HepG2 (cell line): ENCODE measurements at regions of chrX and their contacts with region 1.

Region 1: DNA sequence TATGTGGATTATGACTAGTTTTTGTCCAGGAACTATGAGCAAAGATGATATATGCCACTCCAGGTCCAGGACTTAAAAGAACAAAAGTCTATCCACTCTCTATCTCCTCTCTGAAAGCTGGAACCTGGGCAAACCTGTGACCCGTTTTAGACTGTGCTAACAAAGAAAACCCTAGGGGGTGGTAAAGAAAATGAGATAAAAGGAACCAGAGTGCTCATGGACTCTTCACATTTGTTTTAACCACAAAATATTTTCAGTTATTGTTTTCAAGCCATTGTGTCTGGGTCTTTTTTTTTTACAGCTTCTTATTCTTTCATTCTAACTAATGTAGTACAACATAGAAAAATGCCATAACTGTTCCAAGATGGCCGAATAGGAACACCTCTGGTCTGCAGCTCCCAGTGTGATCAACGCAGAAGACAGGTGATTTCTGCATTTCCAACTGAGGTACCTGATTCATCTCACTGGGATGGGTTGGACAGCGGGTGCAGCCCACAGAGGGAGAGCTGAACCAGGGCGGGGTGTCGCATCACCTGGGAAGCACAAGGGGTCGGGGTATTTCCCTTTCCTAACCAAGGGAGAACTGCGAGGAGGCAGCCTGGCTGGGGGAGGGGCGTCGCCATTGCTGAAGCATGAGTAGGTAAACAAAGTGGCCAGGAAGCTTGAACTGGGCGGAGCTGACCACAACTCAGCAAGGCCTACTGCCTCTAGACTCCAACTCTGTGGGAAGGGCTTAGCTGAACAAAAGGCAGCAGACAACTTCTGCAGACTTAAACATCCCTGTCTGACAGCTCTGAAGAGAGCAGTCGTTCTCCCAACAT is 45.1 kb downstream of the CHM start:
- DNase-seq: peak; percentile 83
- ATAC-seq: peak; percentile 99
- H3K4me3 ChIP-seq: peak overlapping the region in 2 of 3 experiments; percentile 41 to 60; a peak in 4 of 6 replicates
- H3K27ac ChIP-seq: peak overlapping the region; percentile 71
- H3K4me1 ChIP-seq: peaks cover 30% of the 10 kb centered on the region
- H3K27me3 ChIP-seq: no peaks in the 10 kb centered on the region
- CTCF ChIP-seq: no peak; the same call in 1 of the 2 replicates
- EP300 ChIP-seq: no peak
- POLR2A ChIP-seq: no peak
- RAD21 ChIP-seq: no peak

Region 2: DNA sequence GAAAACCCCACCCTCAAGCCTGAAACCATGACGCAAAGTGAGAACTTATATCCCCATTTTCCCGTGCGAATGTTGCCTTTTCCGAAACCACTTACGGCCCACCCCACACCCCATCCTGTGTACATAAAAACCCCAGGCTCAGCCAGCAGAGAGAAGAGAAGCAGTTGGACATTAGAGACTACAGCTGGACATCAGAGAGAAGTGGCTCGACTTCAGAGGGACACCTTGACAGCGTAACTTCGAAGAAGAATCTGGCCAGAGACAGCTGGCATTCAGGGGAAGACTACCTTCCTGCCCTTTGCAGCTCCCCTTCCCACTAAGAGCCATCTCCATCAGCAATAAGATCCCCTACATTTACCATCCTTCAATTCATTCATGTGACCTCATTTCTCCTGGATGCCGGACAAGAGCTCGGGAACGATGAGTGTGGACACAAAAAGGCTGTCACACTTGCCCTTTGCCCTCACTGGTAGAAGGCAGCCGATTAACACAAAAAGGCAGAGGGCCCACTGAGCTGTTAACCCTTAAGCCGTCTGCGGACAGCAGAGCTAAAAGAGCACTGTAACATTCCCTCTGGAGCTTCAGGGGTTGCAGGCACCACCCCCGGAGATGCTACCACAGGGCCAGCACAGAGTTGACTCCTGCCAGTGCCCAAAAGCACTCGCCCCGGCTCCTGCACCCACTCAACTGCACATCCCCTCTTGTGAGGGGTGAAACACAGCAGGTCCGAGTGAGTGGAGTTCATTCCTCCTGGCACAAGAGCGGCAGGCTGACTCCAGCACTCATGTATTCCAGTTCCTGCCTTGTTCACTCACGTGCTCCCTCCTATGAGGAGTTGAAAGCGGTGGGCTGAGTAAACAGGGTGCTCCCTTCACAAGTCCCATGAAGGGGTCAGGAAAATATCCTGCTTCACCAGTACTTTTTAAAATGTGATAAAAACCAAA is 37.6 kb after region 1 on chrX:
- CTCF ChIA-PET with region 1: no interaction called
- POLR2A ChIA-PET with region 1: interaction called, 6 read pairs
- in situ Hi-C with region 1: no loop called
- intact Hi-C with region 1: loop called (anchors 5 kb)
- DNase-seq: peak; percentile 59
- ATAC-seq: peak; percentile 97
- H3K4me3 ChIP-seq: peak overlapping the region; percentile 51 to 58 (median 52); a peak in 5 of 6 replicates
- H3K27ac ChIP-seq: peak overlapping the region; percentile 70
- H3K4me1 ChIP-seq: peaks cover 26% of the 10 kb centered on the region
- H3K27me3 ChIP-seq: no peaks in the 10 kb centered on the region
- CTCF ChIP-seq: no peak
- EP300 ChIP-seq: no peak
- POLR2A ChIP-seq: no peak
- RAD21 ChIP-seq: no peak

Region 3: GRCh38 chrX:86047174-86047935 is 45.1 kb after region 1 on chrX and contains the start of gene CHM:
- CTCF ChIA-PET with region 1: no interaction called
- POLR2A ChIA-PET with region 1: interaction called, 10 read pairs
- in situ Hi-C with region 1: no loop called
- intact Hi-C with region 1: loop called (anchors 5 kb)
- DNase-seq: peak; percentile 80
- ATAC-seq: peak; percentile 98
- H3K4me3 ChIP-seq: peak within 1 kb of the TSS; percentile 71 to 83 (median 78)
- H3K27ac ChIP-seq: peak within 1 kb of the TSS; percentile 91
- H3K4me1 ChIP-seq: peaks cover 11% of the 10 kb centered on the region; the same call in 1 of the 2 replicates
- H3K27me3 ChIP-seq: no peaks in the 10 kb centered on the region
- CTCF ChIP-seq: no peak
- EP300 ChIP-seq: no peak
- POLR2A ChIP-seq: peak; percentile 63 to 79
- RAD21 ChIP-seq: no peak
- total RNA-seq, gene CHM: 15.1 and 19.6 TPM in 2 replicates